ENCODE measurements at regions of chr3 and their contacts with region 1.

Region 1: GRCh38 chr3:146498002-146498736 is 28.8 kb upstream of the PLSCR2 start:
- DNase-seq: no peak
- H3K4me3 ChIP-seq: no peak overlapping the region
- H3K27ac ChIP-seq: no peak overlapping the region
- H3K4me1 ChIP-seq: peaks cover 7% of the 10 kb centered on the region
- H3K27me3 ChIP-seq: no peaks in the 10 kb centered on the region
- CTCF ChIP-seq: no peak

Region 2: GRCh38 chr3:146544002-146544928 is 46.1 kb after region 1 on chr3 and contains the start of gene PLSCR1:
- CTCF ChIA-PET with region 1: no interaction called
- dilution Hi-C with region 1: loop called (anchors 5 kb)
- in situ Hi-C with region 1: no loop called
- intact Hi-C with region 1: no loop called
- DNase-seq: peak; percentile 98
- H3K4me3 ChIP-seq: peak within 1 kb of the TSS; percentile 55 to 82 (median 65)
- H3K27ac ChIP-seq: peak within 1 kb of the TSS; percentile 86
- H3K4me1 ChIP-seq: peaks cover 37% of the 10 kb centered on the region
- H3K27me3 ChIP-seq: no peaks in the 10 kb centered on the region
- CTCF ChIP-seq: peak in 1 of 2 donors; percentile 3
- total RNA-seq, gene PLSCR1: 23.0 to 53.8 TPM

Measured in mammary epithelial cell (primary cell).